PC-9 (cell line): ENCODE measurements at regions of chr3 and their contacts with region 1.

Region 1: GRCh38 chr3:11548721-11549131 is 95.0 kb downstream of the VGLL4 start:
- DNase-seq: peak in 1 of 2 experiments; percentile 75
- H3K4me3 ChIP-seq: no peak overlapping the region
- H3K27ac ChIP-seq: no peak overlapping the region; the same call in 1 of the 2 replicates
- H3K4me1 ChIP-seq: no peaks in the 10 kb centered on the region
- H3K27me3 ChIP-seq: no peaks in the 10 kb centered on the region
- CTCF ChIP-seq: no peak

Region 2: DNA sequence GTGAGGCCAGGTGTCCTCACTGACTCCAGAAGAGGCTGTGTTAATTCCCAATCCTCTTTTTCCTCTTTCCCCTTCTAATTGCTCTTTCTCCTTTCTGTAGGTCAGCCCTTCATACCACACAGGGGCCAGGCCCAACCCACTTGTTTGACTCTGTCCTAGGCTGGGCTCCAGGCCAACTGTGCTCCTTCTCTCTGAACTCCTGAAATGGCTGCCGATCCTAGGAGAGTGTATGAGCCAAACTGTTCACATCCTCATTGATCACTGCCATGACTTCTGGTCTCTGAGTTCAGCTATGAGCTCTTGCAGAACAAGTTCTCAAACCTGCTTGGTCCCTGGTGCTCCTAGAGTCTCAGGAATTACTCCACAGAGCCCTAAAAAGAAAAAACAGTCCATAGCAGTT is 50.1 kb before region 1 on chr3:
- CTCF ChIA-PET with region 1: interaction called, 10 read pairs
- POLR2A ChIA-PET with region 1: no interaction called
- intact Hi-C with region 1: no loop called
- DNase-seq: peak; percentile 64 to 78
- H3K4me3 ChIP-seq: no peak overlapping the region
- H3K27ac ChIP-seq: peak overlapping the region; percentile 79
- H3K4me1 ChIP-seq: peaks cover 40% of the 10 kb centered on the region
- H3K27me3 ChIP-seq: no peaks in the 10 kb centered on the region
- CTCF ChIP-seq: no peak

Region 3: GRCh38 chr3:11514191-11514821 is 34.4 kb before region 1 on chr3:
- CTCF ChIA-PET with region 1: no interaction called
- POLR2A ChIA-PET with region 1: no interaction called
- intact Hi-C with region 1: no loop called
- DNase-seq: peak in 1 of 2 experiments; percentile 13
- H3K4me3 ChIP-seq: no peak overlapping the region
- H3K27ac ChIP-seq: no peak overlapping the region
- H3K4me1 ChIP-seq: peaks cover 7% of the 10 kb centered on the region
- H3K27me3 ChIP-seq: no peaks in the 10 kb centered on the region
- CTCF ChIP-seq: no peak

Region 4: GRCh38 chr3:11591391-11592282 is 42.9 kb after region 1 on chr3:
- CTCF ChIA-PET with region 1: no interaction called
- POLR2A ChIA-PET with region 1: no interaction called
- intact Hi-C with region 1: no loop called
- DNase-seq: peak; percentile 57 to 74
- H3K4me3 ChIP-seq: no peak overlapping the region
- H3K27ac ChIP-seq: peak overlapping the region; percentile 26
- H3K4me1 ChIP-seq: peaks cover 28% of the 10 kb centered on the region
- H3K27me3 ChIP-seq: no peaks in the 10 kb centered on the region
- CTCF ChIP-seq: no peak

Region 5: DNA sequence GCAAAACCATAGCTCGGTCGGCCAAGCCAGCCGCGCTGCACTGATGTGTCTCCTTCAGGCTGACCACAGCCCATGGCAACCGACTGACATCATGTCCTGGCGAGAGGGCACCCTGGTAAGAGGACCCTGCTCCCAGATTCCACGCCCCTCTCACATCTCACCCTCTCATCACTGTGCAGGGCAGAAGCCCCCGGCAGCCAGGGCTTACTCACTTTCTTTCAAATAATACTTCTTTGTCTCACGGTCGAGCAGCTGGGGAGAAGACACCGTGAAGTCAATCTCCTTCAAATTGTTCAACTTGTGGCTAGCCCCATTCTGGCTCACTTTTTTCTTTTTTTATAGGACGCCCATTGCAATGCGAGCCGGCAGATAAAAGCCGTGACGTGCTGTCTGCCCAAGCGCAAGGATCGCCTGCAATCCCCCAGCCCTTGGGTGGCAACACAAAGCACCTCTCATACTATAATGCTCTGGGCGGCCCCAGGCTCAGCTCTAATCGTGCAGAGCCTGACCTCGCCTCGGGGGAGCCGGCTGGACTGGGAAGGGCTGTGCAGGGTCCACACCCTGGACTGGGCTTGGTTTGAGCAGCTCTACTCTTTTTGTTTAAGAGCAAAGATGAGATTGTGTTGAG is 61.4 kb after region 1 on chr3:
- CTCF ChIA-PET with region 1: no interaction called
- POLR2A ChIA-PET with region 1: no interaction called
- intact Hi-C with region 1: no loop called
- DNase-seq: no peak
- H3K4me3 ChIP-seq: no peak overlapping the region
- H3K27ac ChIP-seq: no peak overlapping the region
- H3K4me1 ChIP-seq: no peaks in the 10 kb centered on the region
- H3K27me3 ChIP-seq: no peaks in the 10 kb centered on the region
- CTCF ChIP-seq: no peak